Psoas muscle (tissue), 8 donors: ENCODE measurements at regions of chr3 and their contacts with region 1.

Region 1: GRCh38 chr3:16048435-16049318 is 125.8 kb upstream of the GALNT15 start:
- DNase-seq: no peak
- ATAC-seq: peak; percentile 88 to 94 (median 94)
- H3K4me3 ChIP-seq: peak overlapping the region; percentile 43
- H3K27ac ChIP-seq: peak overlapping the region; percentile 12
- H3K4me1 ChIP-seq: peaks cover 28% of the 10 kb centered on the region
- H3K27me3 ChIP-seq: no peaks in the 10 kb centered on the region
- CTCF ChIP-seq: peak; percentile 89

Region 2: GRCh38 chr3:15820911-15821310 is 227.8 kb before region 1 on chr3:
- intact Hi-C with region 1: loop called in 1 of 2 experiments (anchors 10 kb)
- DNase-seq: no peak
- ATAC-seq: peak in 3 of 4 donors; percentile 42 to 60 (median 43)
- H3K4me3 ChIP-seq: no peak overlapping the region
- H3K27ac ChIP-seq: no peak overlapping the region
- H3K4me1 ChIP-seq: peaks cover 40% of the 10 kb centered on the region
- H3K27me3 ChIP-seq: no peaks in the 10 kb centered on the region
- CTCF ChIP-seq: no peak

Region 3: GRCh38 chr3:16130066-16130465 is 81.4 kb after region 1 on chr3:
- intact Hi-C with region 1: loop called in 1 of 2 experiments (anchors 5 kb)
- DNase-seq: peak; percentile 45 to 68
- ATAC-seq: peak; percentile 60 to 87 (median 84)
- H3K4me3 ChIP-seq: no peak overlapping the region
- H3K27ac ChIP-seq: peak overlapping the region; percentile 52
- H3K4me1 ChIP-seq: peaks cover 43% of the 10 kb centered on the region
- H3K27me3 ChIP-seq: no peaks in the 10 kb centered on the region
- CTCF ChIP-seq: no peak